Activated CD4-positive, alpha-beta T cell treated with anti-CD3 and anti-CD28 coated beads for 36 hours (primary cell): ENCODE measurements at regions of chr2 and their contacts with region 1.

Region 1: DNA sequence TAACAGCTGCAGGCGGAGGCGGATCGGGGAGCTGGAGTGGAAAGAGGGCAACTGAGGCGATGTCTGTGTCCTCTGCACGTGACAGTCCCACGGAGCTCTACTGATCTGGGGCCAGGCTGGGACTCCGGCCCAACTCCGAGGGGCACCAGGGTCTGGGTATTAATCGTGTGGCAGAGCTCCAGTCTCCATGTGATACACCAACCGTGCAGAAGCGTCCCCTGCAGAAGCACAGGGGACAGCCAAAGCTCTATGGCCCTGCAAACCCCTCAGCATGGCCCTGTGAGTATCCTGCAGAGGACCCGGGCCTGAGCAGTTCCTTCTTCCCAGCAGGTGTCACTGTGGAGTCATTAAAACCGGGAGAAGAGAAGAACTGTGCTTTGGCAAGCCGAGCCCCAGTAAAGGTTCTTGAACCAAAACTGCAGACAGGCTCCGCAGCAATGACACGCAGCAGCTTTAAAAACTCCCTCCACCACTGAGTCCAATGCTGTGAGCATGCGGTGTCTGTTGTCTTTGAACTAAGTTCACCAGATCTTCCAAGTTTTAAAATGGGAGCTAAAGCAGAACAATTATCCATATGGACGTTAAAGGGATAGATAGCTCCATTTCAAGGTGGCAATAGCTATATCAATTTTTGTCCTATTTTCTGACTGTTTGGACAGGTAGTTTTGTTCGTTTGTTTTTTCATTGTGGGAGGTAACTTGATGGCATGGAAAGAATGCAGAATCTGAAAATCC is 79.4 kb downstream of the TMEM182 start:
- DNase-seq: peak; percentile 56
- ATAC-seq: peak; percentile 71
- H3K4me3 Mint-ChIP-seq: no peak overlapping the region
- H3K27ac Mint-ChIP-seq: no peak overlapping the region
- H3K4me1 Mint-ChIP-seq: no peaks in the 10 kb centered on the region
- H3K27me3 Mint-ChIP-seq: peaks cover 3% of the 10 kb centered on the region

Region 2: GRCh38 chr2:102852567-102853266 is 11.4 kb after region 1 on chr2:
- CTCF ChIA-PET with region 1: interaction called, 13 read pairs
- POLR2A ChIA-PET with region 1: no interaction called
- intact Hi-C with region 1: no loop called
- DNase-seq: no peak
- ATAC-seq: no peak
- H3K4me3 Mint-ChIP-seq: no peak overlapping the region
- H3K27ac Mint-ChIP-seq: no peak overlapping the region
- H3K4me1 Mint-ChIP-seq: no peaks in the 10 kb centered on the region
- H3K27me3 Mint-ChIP-seq: peaks cover 9% of the 10 kb centered on the region